Panc1 (cell line): ENCODE measurements at regions of chr1 and their contacts with region 1.

Region 1: DNA sequence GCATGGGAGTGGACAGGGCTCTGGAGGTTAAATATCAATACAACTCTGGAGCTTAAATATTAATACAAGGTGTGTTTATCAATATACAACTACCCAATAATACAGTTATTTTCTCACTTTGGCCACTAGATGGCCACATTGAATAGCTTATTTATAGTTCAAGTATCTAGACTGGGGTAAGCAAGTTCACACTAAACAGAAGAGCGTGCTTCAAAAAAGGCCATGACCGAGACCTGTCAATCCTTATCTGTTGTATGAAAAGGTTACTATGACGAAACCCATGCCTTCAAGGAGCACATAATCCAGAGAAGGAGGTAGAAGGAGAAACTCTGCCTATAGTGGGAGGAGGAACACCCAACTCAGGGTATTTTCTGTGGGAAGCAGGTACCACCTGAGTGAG is 29.1 kb downstream of the CHML start:
- DNase-seq: no peak
- ATAC-seq: peak; percentile 53
- H3K4me3 ChIP-seq: no peak overlapping the region
- H3K27ac ChIP-seq: peak overlapping the region; percentile 85
- H3K4me1 ChIP-seq: peaks cover 58% of the 10 kb centered on the region
- H3K27me3 ChIP-seq: no peaks in the 10 kb centered on the region
- CTCF ChIP-seq: peak; percentile 70

Region 2: GRCh38 chr1:241519308-241520079 is 91.6 kb before region 1 on chr1 and contains the start of gene FH:
- CTCF ChIA-PET with region 1: interaction called, 3 read pairs
- POLR2A ChIA-PET with region 1: no interaction called
- in situ Hi-C with region 1: loop called (anchors 10 kb)
- intact Hi-C with region 1: no loop called
- DNase-seq: peak; percentile 94
- ATAC-seq: peak; percentile 99
- H3K4me3 ChIP-seq: peak within 1 kb of the TSS; percentile 71 to 90
- H3K27ac ChIP-seq: peak within 1 kb of the TSS; percentile 84
- H3K4me1 ChIP-seq: peaks cover 12% of the 10 kb centered on the region
- H3K27me3 ChIP-seq: no peaks in the 10 kb centered on the region
- CTCF ChIP-seq: no peak
- total RNA-seq, gene FH: 87.1 TPM

Region 3: DNA sequence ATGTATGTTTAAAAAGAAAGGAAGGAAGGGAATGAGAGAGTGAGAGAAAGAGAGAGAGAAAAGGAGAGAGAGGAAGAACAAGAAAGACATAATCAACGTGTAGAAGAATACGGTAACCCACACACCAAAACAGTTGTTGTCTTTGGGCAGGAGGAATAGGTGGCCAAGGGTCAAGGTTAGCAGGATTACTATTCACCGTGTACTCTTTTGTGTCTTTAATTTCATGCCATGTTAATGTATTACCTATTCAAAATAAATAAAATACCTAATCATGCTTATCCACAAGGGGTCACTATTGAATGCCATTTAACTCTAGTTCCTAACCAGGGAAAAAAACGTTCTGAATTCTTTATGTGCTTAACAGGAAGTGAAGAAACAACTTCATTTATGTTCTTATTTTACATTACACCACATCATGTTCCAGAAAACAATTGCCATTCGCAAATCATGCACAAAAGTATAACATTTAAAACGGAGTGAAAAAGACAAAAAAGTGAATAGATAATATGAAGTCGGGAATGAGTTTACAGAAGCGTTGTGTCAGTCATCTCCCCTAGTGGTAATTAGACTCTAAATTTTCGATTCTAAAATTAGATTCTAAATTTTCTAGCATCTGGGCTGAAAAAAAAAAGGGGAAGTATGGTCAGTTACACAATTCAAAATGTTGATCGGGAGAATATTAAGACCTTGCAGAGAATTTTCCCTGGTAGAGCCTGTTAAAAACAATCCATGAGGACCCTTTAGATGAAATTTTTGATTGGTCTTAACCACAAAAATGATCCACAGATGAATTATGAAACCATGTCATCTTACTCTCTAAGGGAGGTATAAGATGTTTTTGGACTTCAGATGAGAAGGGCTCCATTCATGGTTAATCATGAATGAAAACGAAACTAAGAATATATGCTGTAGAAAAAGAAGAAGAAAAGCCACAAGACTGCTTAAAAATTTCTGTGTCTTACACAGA is 79.6 kb before region 1 on chr1:
- CTCF ChIA-PET with region 1: no interaction called
- POLR2A ChIA-PET with region 1: no interaction called
- in situ Hi-C with region 1: loop called (anchors 10 kb)
- intact Hi-C with region 1: loop called (anchors 2 kb)
- DNase-seq: peak; percentile 76
- ATAC-seq: peak; percentile 90
- H3K4me3 ChIP-seq: peak overlapping the region; percentile 50 to 56
- H3K27ac ChIP-seq: peak overlapping the region; percentile 91
- H3K4me1 ChIP-seq: peaks cover 3% of the 10 kb centered on the region
- H3K27me3 ChIP-seq: no peaks in the 10 kb centered on the region
- CTCF ChIP-seq: peak; percentile 63; the same call in 1 of the 2 replicates

Region 4: DNA sequence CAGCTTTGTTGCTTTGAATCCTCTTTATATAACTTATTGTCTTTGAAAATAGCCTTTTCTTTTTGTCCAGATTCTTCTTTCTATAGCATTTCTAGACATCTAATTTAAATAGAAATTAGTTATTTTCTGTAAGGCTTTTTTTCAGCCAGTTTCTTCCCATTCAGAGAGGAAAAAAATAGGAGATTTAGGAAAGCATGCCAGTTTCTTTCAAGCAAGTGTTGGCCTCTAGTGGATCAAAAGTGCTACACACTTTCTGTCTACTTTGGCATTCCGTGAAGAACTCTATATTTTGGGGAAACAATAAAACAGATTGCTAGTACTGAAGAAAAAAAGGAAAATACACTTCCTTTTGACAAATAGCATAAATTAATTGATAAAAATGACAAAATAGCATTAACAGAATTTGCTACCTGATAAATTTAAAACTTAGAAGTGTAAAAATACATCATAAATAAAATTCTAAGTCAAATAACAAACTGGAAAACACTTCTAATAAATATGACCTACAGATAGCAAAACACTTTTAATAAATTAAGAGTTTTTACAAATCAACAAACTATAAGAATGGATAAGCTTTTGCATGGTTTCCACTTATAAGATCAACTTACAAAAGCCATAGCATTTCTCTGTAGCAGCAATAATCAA is 223.8 kb after region 1 on chr1:
- CTCF ChIA-PET with region 1: no interaction called
- POLR2A ChIA-PET with region 1: interaction called, 3 read pairs
- in situ Hi-C with region 1: no loop called
- intact Hi-C with region 1: loop called (anchors 1 kb)
- DNase-seq: peak; percentile 18
- ATAC-seq: 0 out of 2 replicates have a peak, but pooled peaks have one; percentile 72
- H3K4me3 ChIP-seq: no peak overlapping the region
- H3K27ac ChIP-seq: no peak overlapping the region
- H3K4me1 ChIP-seq: no peaks in the 10 kb centered on the region
- H3K27me3 ChIP-seq: no peaks in the 10 kb centered on the region
- CTCF ChIP-seq: peak; percentile 76; the same call in 1 of the 2 replicates

Region 5: GRCh38 chr1:242377781-242378180 is 766.7 kb after region 1 on chr1:
- CTCF ChIA-PET with region 1: interaction called, 11 read pairs
- POLR2A ChIA-PET with region 1: no interaction called
- in situ Hi-C with region 1: no loop called
- intact Hi-C with region 1: no loop called
- DNase-seq: no peak
- ATAC-seq: no peak
- H3K4me3 ChIP-seq: no peak overlapping the region
- H3K27ac ChIP-seq: no peak overlapping the region
- H3K4me1 ChIP-seq: no peaks in the 10 kb centered on the region
- H3K27me3 ChIP-seq: no peaks in the 10 kb centered on the region
- CTCF ChIP-seq: no peak